PC-9 (cell line): ENCODE measurements at regions of chr9 and their contacts with region 1.

Region 1: DNA sequence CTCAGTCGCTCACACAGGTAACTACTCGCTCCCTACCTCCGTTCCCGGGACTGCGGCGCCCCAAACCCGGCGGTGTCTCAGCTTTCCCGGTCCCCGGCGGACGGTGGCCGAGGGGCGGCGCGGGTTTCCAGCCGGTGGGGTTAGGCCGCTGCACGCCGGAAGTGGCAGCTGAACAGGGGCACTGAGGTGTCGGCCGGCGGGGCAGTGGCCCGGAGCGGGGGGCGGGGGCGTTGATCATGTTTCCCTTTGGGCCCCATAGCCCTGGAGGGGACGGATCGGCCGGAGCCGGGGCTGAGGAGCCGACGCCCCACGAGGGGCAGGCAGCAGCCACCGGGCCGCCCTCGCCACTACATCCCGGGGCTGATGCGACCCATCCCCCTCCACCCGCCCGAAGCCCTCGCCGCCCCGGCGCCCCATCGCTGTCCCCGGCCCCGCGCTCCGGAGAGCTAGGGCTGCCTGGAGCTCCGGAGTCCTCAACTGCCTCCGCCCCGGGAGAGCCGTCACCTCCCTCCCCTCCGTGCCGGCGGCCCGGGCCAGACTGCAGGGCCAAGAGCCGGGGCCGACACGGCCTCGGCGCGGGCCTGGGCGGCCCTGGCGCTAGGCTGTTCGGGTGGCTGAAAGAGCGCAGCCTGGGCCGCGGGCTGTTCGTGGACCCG is at the start of gene DCAF10:
- DNase-seq: peak; percentile 58 to 88
- H3K4me3 ChIP-seq: peak within 1 kb of the TSS; percentile 73
- H3K27ac ChIP-seq: peak within 1 kb of the TSS; percentile 64
- H3K4me1 ChIP-seq: peaks cover 16% of the 10 kb centered on the region
- H3K27me3 ChIP-seq: no peaks in the 10 kb centered on the region
- CTCF ChIP-seq: no peak
- total RNA-seq, gene DCAF10: 20.5 and 22.6 TPM in 2 replicates

Region 2: GRCh38 chr9:37592108-37592951 is 208.4 kb before region 1 on chr9 and contains the start of gene TOMM5:
- CTCF ChIA-PET with region 1: no interaction called
- POLR2A ChIA-PET with region 1: interaction called, 14 read pairs
- intact Hi-C with region 1: no loop called
- DNase-seq: peak; percentile 75 to 76
- H3K4me3 ChIP-seq: peak within 1 kb of the TSS; percentile 64
- H3K27ac ChIP-seq: peak within 1 kb of the TSS; percentile 68
- H3K4me1 ChIP-seq: peaks cover 14% of the 10 kb centered on the region; the same call in 1 of the 2 replicates
- H3K27me3 ChIP-seq: no peaks in the 10 kb centered on the region
- CTCF ChIP-seq: no peak
- total RNA-seq, gene TOMM5: 60.0 and 78.2 TPM in 2 replicates

Region 3: GRCh38 chr9:37913480-37914153 is 112.9 kb after region 1 on chr9:
- CTCF ChIA-PET with region 1: no interaction called
- POLR2A ChIA-PET with region 1: no interaction called
- intact Hi-C with region 1: no loop called
- DNase-seq: peak; percentile 50 to 77
- H3K4me3 ChIP-seq: no peak overlapping the region
- H3K27ac ChIP-seq: no peak overlapping the region
- H3K4me1 ChIP-seq: peaks cover 13% of the 10 kb centered on the region
- H3K27me3 ChIP-seq: no peaks in the 10 kb centered on the region
- CTCF ChIP-seq: peak; percentile 90

Region 4: GRCh38 chr9:38026021-38026809 is 225.5 kb after region 1 on chr9:
- CTCF ChIA-PET with region 1: no interaction called
- POLR2A ChIA-PET with region 1: interaction called, 11 read pairs
- intact Hi-C with region 1: no loop called
- DNase-seq: peak; percentile 61 to 93
- H3K4me3 ChIP-seq: peak overlapping the region; percentile 28; the same call in 1 of the 2 replicates
- H3K27ac ChIP-seq: peak overlapping the region; percentile 93
- H3K4me1 ChIP-seq: peaks cover 93% of the 10 kb centered on the region
- H3K27me3 ChIP-seq: no peaks in the 10 kb centered on the region
- CTCF ChIP-seq: no peak

Region 5: DNA sequence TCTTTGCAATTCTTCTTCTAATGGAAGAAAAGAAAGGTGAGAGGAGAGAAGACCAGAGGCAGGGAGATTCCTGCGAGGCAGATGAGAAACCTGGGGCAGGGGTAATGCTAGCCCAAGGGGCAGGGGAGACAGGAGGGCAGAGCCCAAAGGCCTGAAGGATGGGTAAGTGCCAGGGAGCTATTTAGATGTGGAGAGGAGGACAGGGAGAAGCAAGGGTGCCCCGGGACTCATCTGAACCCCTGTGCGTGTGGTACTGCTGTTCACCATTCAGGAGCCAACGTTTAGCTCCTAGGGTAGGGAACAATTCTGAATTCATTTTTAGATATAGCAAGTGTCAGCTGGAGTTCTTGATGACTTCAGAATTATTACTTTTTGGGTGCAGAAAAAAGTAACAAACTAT is 469.0 kb after region 1 on chr9:
- CTCF ChIA-PET with region 1: no interaction called
- POLR2A ChIA-PET with region 1: interaction called, 13 read pairs
- intact Hi-C with region 1: no loop called
- DNase-seq: no peak
- H3K4me3 ChIP-seq: no peak overlapping the region
- H3K27ac ChIP-seq: no peak overlapping the region
- H3K4me1 ChIP-seq: no peaks in the 10 kb centered on the region
- H3K27me3 ChIP-seq: no peaks in the 10 kb centered on the region
- CTCF ChIP-seq: no peak